Activated B cell treated with CpG ODN at 0.5 μM for 24 hours (primary cell): ENCODE measurements at regions of chr15 and their contacts with region 1.

Region 1: GRCh38 chr15:70763120-70763878 is at the start of gene UACA:
- DNase-seq: peak; percentile 75
- ATAC-seq: peak; percentile 98
- H3K4me3 Mint-ChIP-seq: peak within 1 kb of the TSS; percentile 87
- H3K27ac Mint-ChIP-seq: no peak within 1 kb of the TSS
- H3K4me1 Mint-ChIP-seq: peaks cover 22% of the 10 kb centered on the region
- H3K27me3 Mint-ChIP-seq: peaks cover 18% of the 10 kb centered on the region
- CTCF ChIP-seq: no peak
- total RNA-seq, gene UACA: 0.56 and 1.00 TPM in 2 replicates

Region 2: GRCh38 chr15:69452692-69453521 is 1310.4 kb before region 1 on chr15 and contains the start of gene RPLP1:
- CTCF ChIA-PET with region 1: no interaction called
- POLR2A ChIA-PET with region 1: no interaction called
- intact Hi-C with region 1: loop called (anchors 5 kb)
- DNase-seq: peak; percentile 94
- ATAC-seq: peak; percentile 90
- H3K4me3 Mint-ChIP-seq: peak within 1 kb of the TSS; percentile 98
- H3K27ac Mint-ChIP-seq: peak within 1 kb of the TSS; percentile 99
- H3K4me1 Mint-ChIP-seq: peaks cover 46% of the 10 kb centered on the region
- H3K27me3 Mint-ChIP-seq: no peaks in the 10 kb centered on the region
- CTCF ChIP-seq: no peak
- total RNA-seq, gene RPLP1: 3,035 and 3,437 TPM in 2 replicates